ENCODE measurements at regions of chr9 and their contacts with region 1.

Region 1: GRCh38 chr9:31996322-31996721 is 388.1 kb upstream of the ACO1 start:
- DNase-seq: no peak
- ATAC-seq: no peak
- H3K4me3 ChIP-seq: no peak overlapping the region
- H3K27ac ChIP-seq: no peak overlapping the region
- H3K4me1 ChIP-seq: no peaks in the 10 kb centered on the region
- H3K27me3 ChIP-seq: no peaks in the 10 kb centered on the region
- CTCF ChIP-seq: no peak; the same call in 1 of the 2 replicates

Region 2: DNA sequence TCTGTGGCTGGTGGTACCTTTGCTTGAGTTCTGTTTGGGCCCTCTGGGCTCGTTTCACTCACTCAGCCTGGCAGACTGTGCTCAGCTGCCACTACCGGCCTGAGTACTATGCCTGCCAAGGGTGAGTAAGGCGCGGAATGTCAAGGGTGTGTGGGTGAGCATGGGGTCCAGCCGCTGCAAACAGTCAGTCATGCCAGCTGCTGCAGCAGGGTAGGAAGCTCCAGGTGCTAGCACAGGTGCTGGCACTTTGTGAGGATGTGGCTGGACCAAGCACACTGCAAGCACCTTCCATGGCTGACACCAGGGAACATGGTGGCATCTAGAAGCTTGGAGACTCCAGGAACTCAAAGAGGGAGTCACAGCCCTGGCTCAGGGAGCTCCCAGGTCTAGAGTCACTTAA is 19.5 kb after region 1 on chr9:
- CTCF ChIA-PET with region 1: no interaction called
- POLR2A ChIA-PET with region 1: no interaction called
- in situ Hi-C with region 1: no loop called
- intact Hi-C with region 1: loop called (anchors 2 kb)
- DNase-seq: no peak
- ATAC-seq: no peak
- H3K4me3 ChIP-seq: no peak overlapping the region
- H3K27ac ChIP-seq: no peak overlapping the region
- H3K4me1 ChIP-seq: no peaks in the 10 kb centered on the region
- H3K27me3 ChIP-seq: no peaks in the 10 kb centered on the region
- CTCF ChIP-seq: no peak